H1 (cell line): ENCODE measurements at regions of chr3 and their contacts with region 1.

Region 1: DNA sequence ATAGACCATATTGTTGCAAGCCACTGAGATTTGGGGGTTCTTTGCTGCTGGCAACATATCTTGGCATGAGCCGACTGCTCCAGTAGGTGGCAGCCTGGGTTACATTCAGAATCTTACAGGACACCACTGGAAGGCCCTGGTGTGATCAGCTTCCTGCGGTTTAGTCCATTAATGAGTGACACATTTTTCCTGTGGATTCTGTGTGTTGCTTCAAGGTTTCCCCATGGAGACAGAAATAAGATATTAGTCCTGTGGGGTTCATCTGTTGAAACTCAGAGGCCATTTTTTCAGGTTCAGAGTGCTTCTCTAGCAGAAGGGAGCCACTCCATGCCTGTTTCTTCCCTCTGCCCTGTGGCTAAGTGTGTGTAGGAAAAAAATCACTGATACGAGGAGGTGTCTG is 116.2 kb downstream of the MFSD1 start:
- DNase-seq: peak; percentile 29 to 74
- H3K4me3 ChIP-seq: no peak overlapping the region
- H3K27ac ChIP-seq: no peak overlapping the region
- H3K4me1 ChIP-seq: no peaks in the 10 kb centered on the region
- H3K27me3 ChIP-seq: no peaks in the 10 kb centered on the region
- CTCF ChIP-seq: peak; percentile 76 to 90 (median 78)
- EP300 ChIP-seq: no peak
- POLR2A ChIP-seq: no peak
- RAD21 ChIP-seq: peak; percentile 86 to 90

Region 2: GRCh38 chr3:158809642-158810041 is 108.4 kb before region 1 on chr3:
- CTCF ChIA-PET with region 1: no interaction called
- POLR2A ChIA-PET with region 1: no interaction called
- DNase-seq: no peak
- H3K4me3 ChIP-seq: no peak overlapping the region
- H3K27ac ChIP-seq: no peak overlapping the region
- H3K4me1 ChIP-seq: no peaks in the 10 kb centered on the region
- H3K27me3 ChIP-seq: no peaks in the 10 kb centered on the region
- CTCF ChIP-seq: no peak
- EP300 ChIP-seq: no peak
- POLR2A ChIP-seq: no peak
- RAD21 ChIP-seq: no peak

Region 3: GRCh38 chr3:158882445-158882844 is 35.6 kb before region 1 on chr3:
- CTCF ChIA-PET with region 1: no interaction called
- POLR2A ChIA-PET with region 1: no interaction called
- DNase-seq: no peak
- H3K4me3 ChIP-seq: no peak overlapping the region
- H3K27ac ChIP-seq: no peak overlapping the region
- H3K4me1 ChIP-seq: no peaks in the 10 kb centered on the region
- H3K27me3 ChIP-seq: no peaks in the 10 kb centered on the region
- CTCF ChIP-seq: no peak
- EP300 ChIP-seq: no peak
- POLR2A ChIP-seq: no peak
- RAD21 ChIP-seq: no peak

Region 4: DNA sequence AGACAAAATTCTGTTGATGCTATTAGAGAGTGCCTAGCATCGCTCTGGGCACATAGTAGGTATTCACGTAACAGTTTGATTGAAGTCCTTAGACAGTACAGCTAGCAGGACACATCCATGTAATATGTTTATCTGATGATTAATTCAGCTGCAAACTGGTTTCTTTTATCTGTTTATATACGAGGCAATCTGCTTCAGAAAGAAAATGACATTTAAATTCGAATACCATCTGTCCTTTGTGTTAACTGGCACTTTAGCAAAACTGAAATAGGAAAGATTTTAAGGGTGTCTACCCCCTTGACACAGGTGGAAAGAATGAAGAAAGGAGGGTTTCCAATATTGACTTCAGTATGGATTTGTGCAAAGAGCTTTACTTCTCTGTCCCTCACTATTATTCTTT is 76.4 kb after region 1 on chr3:
- CTCF ChIA-PET with region 1: interaction called, 10 read pairs
- POLR2A ChIA-PET with region 1: no interaction called
- DNase-seq: no peak
- H3K4me3 ChIP-seq: no peak overlapping the region
- H3K27ac ChIP-seq: no peak overlapping the region
- H3K4me1 ChIP-seq: peaks cover 0 to 3% (median 2%) of the 10 kb centered on the region in 4 experiments; a peak in 3 of 7 replicates
- H3K27me3 ChIP-seq: no peaks in the 10 kb centered on the region
- CTCF ChIP-seq: no peak
- EP300 ChIP-seq: no peak
- POLR2A ChIP-seq: no peak
- RAD21 ChIP-seq: no peak

Region 5: GRCh38 chr3:159091936-159092335 is 173.9 kb after region 1 on chr3:
- CTCF ChIA-PET with region 1: no interaction called
- POLR2A ChIA-PET with region 1: no interaction called
- DNase-seq: no peak
- H3K4me3 ChIP-seq: no peak overlapping the region
- H3K27ac ChIP-seq: no peak overlapping the region
- H3K4me1 ChIP-seq: no peaks in the 10 kb centered on the region
- H3K27me3 ChIP-seq: no peaks in the 10 kb centered on the region
- CTCF ChIP-seq: no peak
- EP300 ChIP-seq: no peak
- POLR2A ChIP-seq: no peak
- RAD21 ChIP-seq: peak; percentile 22 to 36

Region 6: DNA sequence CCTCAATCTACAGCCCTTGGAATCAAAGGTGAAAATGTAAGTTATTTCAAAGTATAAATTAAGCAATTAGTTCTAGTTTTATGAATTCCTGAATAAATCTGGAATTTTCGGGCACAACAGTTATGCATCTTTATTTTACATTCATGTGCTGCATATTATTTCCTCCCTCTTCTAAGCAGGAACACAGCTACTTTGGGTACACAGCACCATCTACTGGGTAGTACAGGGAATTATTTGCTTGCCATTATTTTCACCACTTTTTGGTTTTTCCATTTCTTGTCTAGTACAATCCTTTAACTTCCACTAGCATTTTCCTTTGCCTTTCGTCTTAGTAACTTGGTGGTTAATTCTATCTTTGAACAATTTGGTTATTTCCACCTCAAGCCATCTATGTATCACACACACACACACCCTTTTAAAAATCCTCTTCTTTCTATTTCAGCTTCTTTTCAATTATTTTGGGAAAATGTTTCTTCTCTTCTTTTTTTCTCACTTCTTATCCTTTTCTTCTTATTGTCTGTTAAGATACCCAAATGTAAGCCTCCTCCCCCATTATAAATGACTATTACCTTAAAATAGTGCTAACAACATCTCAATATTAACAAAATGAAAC is 334.9 kb after region 1 on chr3:
- CTCF ChIA-PET with region 1: interaction called, 41 read pairs
- POLR2A ChIA-PET with region 1: no interaction called
- DNase-seq: no peak
- H3K4me3 ChIP-seq: no peak overlapping the region
- H3K27ac ChIP-seq: no peak overlapping the region
- H3K4me1 ChIP-seq: no peaks in the 10 kb centered on the region
- H3K27me3 ChIP-seq: no peaks in the 10 kb centered on the region
- CTCF ChIP-seq: peak in 2 of 3 experiments; percentile 73 to 74; a peak in 3 of 4 replicates
- EP300 ChIP-seq: no peak
- POLR2A ChIP-seq: no peak
- RAD21 ChIP-seq: peak; percentile 94